ENCODE measurements at regions of chr11 and their contacts with region 1.

Region 1: GRCh38 chr11:47176328-47177228 is at the start of gene ARFGAP2:
- DNase-seq: peak; percentile 100
- H3K4me3 ChIP-seq: peak within 1 kb of the TSS; percentile 88 to 99
- H3K27ac ChIP-seq: peak within 1 kb of the TSS; percentile 94
- H3K4me1 ChIP-seq: peaks cover 15 to 18% of the 10 kb centered on the region in 2 experiments
- H3K27me3 ChIP-seq: no peaks in the 10 kb centered on the region
- CTCF ChIP-seq: no peak
- EP300 ChIP-seq: peak in 1 of 2 experiments; percentile 6; a peak in 1 of 4 replicates
- RAD21 ChIP-seq: no peak
- polyA plus RNA-seq, gene ARFGAP2: 52.5 and 64.0 TPM in 2 replicates

Region 2: GRCh38 chr11:46936138-46937110 is 240.2 kb before region 1 on chr11 and contains the start of gene CSTPP1:
- CTCF ChIA-PET with region 1: no interaction called
- POLR2A ChIA-PET with region 1: no interaction called
- DNase-seq: peak; percentile 95
- H3K4me3 ChIP-seq: peak within 1 kb of the TSS; percentile 55 to 73
- H3K27ac ChIP-seq: peak within 1 kb of the TSS; percentile 72 to 81
- H3K4me1 ChIP-seq: peaks cover 0 to 5% of the 10 kb centered on the region in 2 experiments; a peak in 2 of 4 replicates
- H3K27me3 ChIP-seq: no peaks in the 10 kb centered on the region
- CTCF ChIP-seq: no peak
- EP300 ChIP-seq: no peak
- RAD21 ChIP-seq: 0 out of 2 replicates have a peak, but pooled peaks have one; percentile 19
- polyA plus RNA-seq, gene CSTPP1: 37.2 and 85.7 TPM in 2 replicates

Region 3: DNA sequence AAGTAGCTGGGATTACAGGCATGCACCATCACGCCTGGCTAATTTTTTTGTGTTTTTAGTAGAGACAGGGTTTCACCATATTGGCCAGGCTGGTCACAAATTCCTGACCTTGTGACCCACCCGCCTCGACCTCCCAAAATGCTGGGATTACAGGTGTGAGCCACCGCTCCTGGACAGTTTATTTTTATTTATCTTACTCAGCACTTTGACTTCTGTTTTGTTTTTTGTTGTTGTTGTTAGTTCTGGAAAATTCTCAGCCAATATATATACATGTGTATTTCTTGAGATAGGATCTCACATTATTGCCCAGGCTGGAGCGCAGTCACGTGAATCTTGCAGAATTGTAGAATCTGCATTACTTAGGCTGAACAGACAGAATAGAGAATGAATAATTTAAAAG is 132.5 kb before region 1 on chr11:
- CTCF ChIA-PET with region 1: no interaction called
- POLR2A ChIA-PET with region 1: no interaction called
- DNase-seq: no peak
- H3K4me3 ChIP-seq: no peak overlapping the region
- H3K27ac ChIP-seq: no peak overlapping the region
- H3K4me1 ChIP-seq: no peaks in the 10 kb centered on the region
- H3K27me3 ChIP-seq: no peaks in the 10 kb centered on the region
- CTCF ChIP-seq: no peak
- EP300 ChIP-seq: no peak
- RAD21 ChIP-seq: no peak

Region 4: DNA sequence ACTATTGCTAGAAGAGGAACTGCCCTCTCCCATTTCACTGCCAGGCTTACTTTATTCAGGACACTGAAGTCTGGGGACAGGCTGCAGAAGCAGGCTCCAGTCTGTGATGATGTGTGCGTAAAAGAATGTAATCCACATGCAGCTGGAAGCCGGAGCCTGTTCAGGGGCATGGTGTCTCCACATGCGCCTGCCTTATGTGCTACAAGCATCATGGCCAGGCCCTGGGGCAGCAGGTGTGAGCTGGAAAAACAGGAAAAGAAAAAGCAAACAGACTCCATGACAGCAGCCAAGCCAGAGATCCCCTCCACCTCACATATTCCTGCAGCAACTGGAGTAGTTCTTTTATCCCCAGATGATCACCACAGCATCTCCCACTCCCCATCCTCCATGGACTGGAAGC is 33.3 kb before region 1 on chr11:
- CTCF ChIA-PET with region 1: no interaction called
- POLR2A ChIA-PET with region 1: no interaction called
- DNase-seq: peak; percentile 61
- H3K4me3 ChIP-seq: no peak overlapping the region
- H3K27ac ChIP-seq: peak overlapping the region; percentile 55 to 75
- H3K4me1 ChIP-seq: peaks cover 2 to 19% of the 10 kb centered on the region in 2 experiments; a peak in 1 of 4 replicates
- H3K27me3 ChIP-seq: no peaks in the 10 kb centered on the region
- CTCF ChIP-seq: no peak
- EP300 ChIP-seq: peak in 1 of 2 experiments; percentile 30; a peak in 1 of 4 replicates
- RAD21 ChIP-seq: no peak

Region 5: GRCh38 chr11:47161134-47161854 is 15.3 kb before region 1 on chr11:
- CTCF ChIA-PET with region 1: interaction called, 18 read pairs
- POLR2A ChIA-PET with region 1: interaction called, 4 read pairs
- DNase-seq: peak; percentile 91
- H3K4me3 ChIP-seq: no peak overlapping the region; a peak in 1 of 4 replicates
- H3K27ac ChIP-seq: no peak overlapping the region; a peak in 1 of 4 replicates
- H3K4me1 ChIP-seq: no peaks in the 10 kb centered on the region; a peak in 1 of 4 replicates
- H3K27me3 ChIP-seq: no peaks in the 10 kb centered on the region
- CTCF ChIP-seq: peak; percentile 76
- EP300 ChIP-seq: no peak
- RAD21 ChIP-seq: peak; percentile 82

Region 6: DNA sequence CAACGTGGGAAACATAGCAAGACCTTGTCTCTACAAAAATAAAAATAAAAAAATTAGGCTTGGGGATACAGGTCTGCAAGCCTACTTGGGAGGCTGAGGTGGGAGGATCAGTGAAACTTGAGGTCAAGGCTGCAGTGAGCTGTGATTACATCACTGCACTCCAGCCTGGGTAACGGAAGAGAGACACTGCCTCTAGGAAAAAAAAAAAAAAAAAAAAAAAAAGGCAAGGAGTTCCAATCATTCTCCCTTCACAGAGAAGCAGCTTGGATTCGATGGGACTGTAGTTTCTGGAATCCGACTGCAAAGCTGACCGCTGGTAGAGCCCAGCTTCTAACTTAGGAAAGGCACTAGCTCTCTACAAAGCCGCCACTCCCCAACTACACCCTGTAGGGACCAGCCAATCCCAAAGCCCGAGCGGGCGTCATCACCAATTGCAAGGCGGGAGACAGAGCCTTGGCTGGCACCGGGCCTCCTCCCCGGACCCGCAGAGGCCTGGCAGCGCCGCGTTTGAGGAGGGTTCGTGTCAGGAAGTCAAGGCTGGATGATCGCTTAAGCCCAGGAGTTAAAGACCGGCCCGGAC is 37.5 kb after region 1 on chr11:
- CTCF ChIA-PET with region 1: interaction called, 28 read pairs
- POLR2A ChIA-PET with region 1: interaction called, 3 read pairs
- DNase-seq: peak; percentile 88
- H3K4me3 ChIP-seq: peak overlapping the region; percentile 61 to 79
- H3K27ac ChIP-seq: peak overlapping the region; percentile 87 to 90
- H3K4me1 ChIP-seq: peaks cover 16 to 20% of the 10 kb centered on the region in 2 experiments; a peak in 2 of 4 replicates
- H3K27me3 ChIP-seq: no peaks in the 10 kb centered on the region
- CTCF ChIP-seq: no peak
- EP300 ChIP-seq: no peak
- RAD21 ChIP-seq: no peak

Region 7: GRCh38 chr11:47233989-47234668 is 57.6 kb after region 1 on chr11:
- CTCF ChIA-PET with region 1: interaction called, 14 read pairs
- POLR2A ChIA-PET with region 1: no interaction called
- DNase-seq: peak; percentile 31
- H3K4me3 ChIP-seq: no peak overlapping the region
- H3K27ac ChIP-seq: peak overlapping the region in 1 of 2 experiments; percentile 20; a peak in 1 of 4 replicates
- H3K4me1 ChIP-seq: peaks cover 2 to 14% of the 10 kb centered on the region in 2 experiments; a peak in 2 of 4 replicates
- H3K27me3 ChIP-seq: no peaks in the 10 kb centered on the region
- CTCF ChIP-seq: peak; percentile 38
- EP300 ChIP-seq: no peak
- RAD21 ChIP-seq: peak; percentile 51

Region 8: GRCh38 chr11:47248664-47249377 is 72.2 kb after region 1 on chr11 and contains the start of gene ACP2:
- CTCF ChIA-PET with region 1: interaction called, 38 read pairs
- POLR2A ChIA-PET with region 1: interaction called, 5 read pairs
- DNase-seq: peak; percentile 89
- H3K4me3 ChIP-seq: peak within 1 kb of the TSS; percentile 75 to 92
- H3K27ac ChIP-seq: peak within 1 kb of the TSS; percentile 63 to 96
- H3K4me1 ChIP-seq: peaks cover 8 to 15% of the 10 kb centered on the region in 2 experiments
- H3K27me3 ChIP-seq: no peaks in the 10 kb centered on the region
- CTCF ChIP-seq: peak; percentile 49
- EP300 ChIP-seq: no peak
- RAD21 ChIP-seq: peak; percentile 10; the same call in 1 of the 2 replicates
- polyA plus RNA-seq, gene ACP2: 15.9 and 17.5 TPM in 2 replicates

Region 9: GRCh38 chr11:47259178-47259977 is 82.8 kb after region 1 on chr11:
- CTCF ChIA-PET with region 1: interaction called, 78 read pairs
- POLR2A ChIA-PET with region 1: no interaction called
- DNase-seq: peak; percentile 74
- H3K4me3 ChIP-seq: no peak overlapping the region
- H3K27ac ChIP-seq: no peak overlapping the region
- H3K4me1 ChIP-seq: peaks cover 17 to 20% of the 10 kb centered on the region in 2 experiments; a peak in 3 of 4 replicates
- H3K27me3 ChIP-seq: no peaks in the 10 kb centered on the region
- CTCF ChIP-seq: peak; percentile 58
- EP300 ChIP-seq: no peak
- RAD21 ChIP-seq: peak; percentile 73

Region 10: GRCh38 chr11:47269002-47269828 is 92.6 kb after region 1 on chr11:
- CTCF ChIA-PET with region 1: interaction called, 17 read pairs
- POLR2A ChIA-PET with region 1: no interaction called
- DNase-seq: peak; percentile 98
- H3K4me3 ChIP-seq: peak overlapping the region; percentile 64 to 73
- H3K27ac ChIP-seq: peak overlapping the region; percentile 85 to 96
- H3K4me1 ChIP-seq: peaks cover 34 to 47% of the 10 kb centered on the region in 2 experiments
- H3K27me3 ChIP-seq: no peaks in the 10 kb centered on the region
- CTCF ChIP-seq: no peak
- EP300 ChIP-seq: no peak; a peak in 1 of 4 replicates
- RAD21 ChIP-seq: no peak